ENCODE measurements at regions of chr2 and their contacts with region 1.

Region 1: GRCh38 chr2:6474161-6475140 is 391.3 kb downstream of the CMPK2 start:
- DNase-seq: no peak
- H3K4me3 ChIP-seq: no peak overlapping the region
- H3K27ac ChIP-seq: no peak overlapping the region
- H3K4me1 ChIP-seq: no peaks in the 10 kb centered on the region
- H3K27me3 ChIP-seq: peaks cover 0 to 9% of the 10 kb centered on the region in 2 donors
- CTCF ChIP-seq: no peak
- POLR2A ChIP-seq: no peak

Region 2: GRCh38 chr2:5391362-5391761 is 1083.1 kb before region 1 on chr2:
- intact Hi-C with region 1: no loop called
- DNase-seq: no peak
- H3K4me3 ChIP-seq: no peak overlapping the region
- H3K27ac ChIP-seq: no peak overlapping the region
- H3K4me1 ChIP-seq: no peaks in the 10 kb centered on the region
- H3K27me3 ChIP-seq: no peaks in the 10 kb centered on the region
- CTCF ChIP-seq: no peak
- POLR2A ChIP-seq: no peak

Region 3: DNA sequence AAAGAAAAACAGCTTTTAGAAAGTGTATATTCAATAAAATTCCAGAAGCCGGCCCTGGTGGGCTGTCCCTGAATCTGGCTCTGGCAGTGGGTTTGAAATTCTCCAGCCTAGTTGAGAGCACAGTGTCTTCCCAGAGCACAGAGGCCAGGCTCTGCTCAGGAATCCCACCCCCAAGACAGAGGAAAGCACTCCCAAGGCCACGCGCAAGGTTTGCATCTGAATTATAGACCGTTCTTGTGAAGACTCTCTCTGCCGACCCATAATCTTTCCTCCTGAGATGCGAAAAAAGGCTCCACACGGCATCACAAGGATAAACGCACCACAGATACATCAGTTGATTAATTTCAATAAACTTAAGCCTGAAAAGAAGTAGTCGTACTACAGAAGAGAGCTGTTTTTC is 49.0 kb after region 1 on chr2:
- intact Hi-C with region 1: no loop called
- DNase-seq: no peak
- H3K4me3 ChIP-seq: no peak overlapping the region
- H3K27ac ChIP-seq: no peak overlapping the region
- H3K4me1 ChIP-seq: no peaks in the 10 kb centered on the region
- H3K27me3 ChIP-seq: no peaks in the 10 kb centered on the region
- CTCF ChIP-seq: no peak
- POLR2A ChIP-seq: no peak

Region 4: DNA sequence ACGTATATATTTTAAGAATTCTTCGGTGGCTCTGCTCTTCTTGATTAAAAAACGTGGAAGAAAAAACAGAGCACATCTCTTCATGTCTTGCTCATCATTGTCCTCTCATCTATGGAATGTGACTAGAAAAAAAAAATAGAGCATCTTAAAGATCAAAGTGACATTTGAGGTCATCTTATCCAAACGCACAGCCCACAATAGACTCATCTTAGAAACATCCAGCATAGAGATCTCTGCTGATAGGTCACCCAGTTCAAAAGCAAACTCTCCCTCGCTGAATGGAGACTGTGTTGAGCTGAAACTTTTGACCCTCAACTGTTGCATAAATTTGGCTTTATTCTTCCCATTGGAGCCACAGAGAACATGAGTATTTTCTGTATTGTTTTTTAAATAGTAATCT is 326.1 kb after region 1 on chr2:
- intact Hi-C with region 1: loop called (anchors 5 kb)
- DNase-seq: no peak
- H3K4me3 ChIP-seq: no peak overlapping the region
- H3K27ac ChIP-seq: no peak overlapping the region
- H3K4me1 ChIP-seq: no peaks in the 10 kb centered on the region
- H3K27me3 ChIP-seq: no peaks in the 10 kb centered on the region
- CTCF ChIP-seq: no peak
- POLR2A ChIP-seq: no peak